CD4-positive, alpha-beta memory T cell (primary cell): ENCODE measurements at regions of chr3 and their contacts with region 1.

Region 1: GRCh38 chr3:134378384-134378783 is 4.1 kb upstream of the AMOTL2 start:
- DNase-seq: peak in 4 of 5 donors; percentile 22 to 32 (median 30)
- H3K4me3 ChIP-seq: no peak overlapping the region
- H3K4me3 Mint-ChIP-seq: no peak overlapping the region
- H3K27ac ChIP-seq: no peak overlapping the region
- H3K27ac Mint-ChIP-seq: no peak overlapping the region
- H3K4me1 ChIP-seq: peaks cover 8% of the 10 kb centered on the region
- H3K4me1 Mint-ChIP-seq: peaks cover 8 to 11% (median 10%) of the 10 kb centered on the region in 4 donors
- H3K27me3 ChIP-seq: peaks cover 10% of the 10 kb centered on the region
- H3K27me3 Mint-ChIP-seq: peaks cover 19 to 25% of the 10 kb centered on the region in 2 donors

Region 2: GRCh38 chr3:134018406-134018805 is 360.0 kb before region 1 on chr3:
- CTCF ChIA-PET with region 1: no interaction called
- POLR2A ChIA-PET with region 1: no interaction called
- intact Hi-C with region 1: no loop called
- DNase-seq: no peak
- H3K4me3 ChIP-seq: no peak overlapping the region
- H3K4me3 Mint-ChIP-seq: no peak overlapping the region
- H3K27ac ChIP-seq: no peak overlapping the region
- H3K27ac Mint-ChIP-seq: no peak overlapping the region
- H3K4me1 ChIP-seq: no peaks in the 10 kb centered on the region
- H3K4me1 Mint-ChIP-seq: no peaks in the 10 kb centered on the region
- H3K27me3 ChIP-seq: no peaks in the 10 kb centered on the region
- H3K27me3 Mint-ChIP-seq: peaks cover 4 to 5% of the 10 kb centered on the region in 2 donors

Region 3: DNA sequence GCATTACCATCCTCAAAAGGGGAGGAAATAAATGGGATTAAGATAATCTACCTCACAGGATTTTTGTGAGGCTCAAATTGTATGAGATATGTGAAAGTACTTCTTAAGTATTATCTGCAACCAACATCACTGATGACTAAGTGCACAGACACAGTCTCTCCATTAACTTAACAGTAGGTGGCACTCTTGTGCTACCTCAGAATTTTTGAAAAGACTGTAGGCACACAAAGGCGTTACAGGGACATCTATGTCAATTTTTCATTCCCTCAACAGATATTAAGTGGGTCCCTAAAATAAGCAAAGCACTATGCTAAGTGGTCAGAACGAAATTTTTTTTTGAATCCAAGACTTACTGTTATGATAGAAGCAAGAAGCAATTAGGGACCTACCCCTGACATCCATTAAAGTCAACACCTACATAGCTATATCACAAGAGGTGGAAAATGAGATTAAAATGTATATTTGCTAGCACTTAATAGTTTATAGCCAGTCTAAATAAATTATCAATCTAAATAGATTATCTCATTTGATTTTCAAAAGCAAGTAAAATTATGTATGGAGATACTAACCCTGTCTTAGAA is 180.6 kb before region 1 on chr3:
- CTCF ChIA-PET with region 1: no interaction called
- POLR2A ChIA-PET with region 1: no interaction called
- intact Hi-C with region 1: loop called (anchors 5 kb)
- DNase-seq: peak in 4 of 5 donors; percentile 39 to 49 (median 44)
- H3K4me3 ChIP-seq: no peak overlapping the region
- H3K4me3 Mint-ChIP-seq: no peak overlapping the region
- H3K27ac ChIP-seq: no peak overlapping the region
- H3K27ac Mint-ChIP-seq: no peak overlapping the region
- H3K4me1 ChIP-seq: no peaks in the 10 kb centered on the region
- H3K4me1 Mint-ChIP-seq: peaks cover 0 to 6% (median 1%) of the 10 kb centered on the region in 4 donors
- H3K27me3 ChIP-seq: no peaks in the 10 kb centered on the region
- H3K27me3 Mint-ChIP-seq: no peaks in the 10 kb centered on the region

Region 4: DNA sequence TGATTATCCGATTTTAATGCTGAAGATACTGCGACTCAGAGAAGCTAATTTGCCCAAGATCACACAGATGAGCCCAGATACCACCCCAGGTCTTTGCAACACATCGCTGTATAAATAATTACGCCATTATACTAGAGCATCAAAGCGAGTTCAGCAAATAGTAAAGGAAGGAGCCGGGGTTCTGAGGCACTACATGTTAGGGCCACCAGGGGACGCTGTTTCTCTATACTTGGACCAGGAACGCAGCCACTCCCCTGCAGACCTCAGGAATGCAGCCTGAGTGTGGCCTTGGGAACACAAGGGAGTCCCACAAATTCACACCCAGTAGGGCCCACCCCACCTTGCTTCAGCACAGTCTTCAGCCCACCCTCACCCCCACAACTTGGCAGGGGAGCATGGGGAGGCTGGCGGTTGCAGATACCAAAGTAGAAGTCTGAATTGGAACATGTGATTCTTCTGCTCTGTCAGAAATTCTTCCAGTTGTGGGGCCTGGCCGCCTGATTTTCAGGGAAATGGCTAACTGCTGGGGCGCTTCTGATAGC is 70.0 kb before region 1 on chr3:
- CTCF ChIA-PET with region 1: interaction called, 24 read pairs
- POLR2A ChIA-PET with region 1: no interaction called
- intact Hi-C with region 1: loop called (anchors 1 kb)
- DNase-seq: peak; percentile 68 to 74 (median 71)
- H3K4me3 ChIP-seq: no peak overlapping the region
- H3K4me3 Mint-ChIP-seq: peak overlapping the region in 4 of 8 donors; percentile 3 to 70 (median 67)
- H3K27ac ChIP-seq: no peak overlapping the region
- H3K27ac Mint-ChIP-seq: no peak overlapping the region
- H3K4me1 ChIP-seq: peaks cover under 1% of the 10 kb centered on the region
- H3K4me1 Mint-ChIP-seq: peaks cover 2 to 7% (median 3%) of the 10 kb centered on the region in 4 donors
- H3K27me3 ChIP-seq: peaks cover 5% of the 10 kb centered on the region
- H3K27me3 Mint-ChIP-seq: peaks cover 21% of the 10 kb centered on the region in 2 donors

Region 5: DNA sequence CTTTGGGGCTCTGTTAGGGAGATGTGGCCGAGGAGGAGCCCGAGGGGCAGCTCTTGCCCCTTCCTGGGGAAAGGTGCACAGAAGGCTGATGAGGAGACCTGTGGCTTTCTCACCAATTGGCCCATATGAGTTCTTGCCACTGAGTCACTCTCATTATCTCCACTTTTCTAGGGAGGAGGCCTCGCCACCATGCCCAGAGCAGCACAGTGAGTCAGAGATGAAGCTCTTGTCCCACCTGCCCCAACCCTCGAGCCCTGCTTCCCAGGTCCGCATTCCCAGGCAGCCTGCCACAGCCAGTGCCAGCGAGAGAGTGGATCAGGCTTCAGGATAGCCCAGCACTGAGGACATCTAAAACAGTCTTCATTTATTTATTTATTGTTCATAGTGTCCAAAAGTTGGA is 57.6 kb before region 1 on chr3:
- CTCF ChIA-PET with region 1: no interaction called
- POLR2A ChIA-PET with region 1: no interaction called
- intact Hi-C with region 1: no loop called
- DNase-seq: no peak
- H3K4me3 ChIP-seq: no peak overlapping the region
- H3K4me3 Mint-ChIP-seq: no peak overlapping the region
- H3K27ac ChIP-seq: no peak overlapping the region
- H3K27ac Mint-ChIP-seq: no peak overlapping the region
- H3K4me1 ChIP-seq: no peaks in the 10 kb centered on the region
- H3K4me1 Mint-ChIP-seq: no peaks in the 10 kb centered on the region
- H3K27me3 ChIP-seq: no peaks in the 10 kb centered on the region
- H3K27me3 Mint-ChIP-seq: peaks cover 13 to 15% of the 10 kb centered on the region in 2 donors

Region 6: DNA sequence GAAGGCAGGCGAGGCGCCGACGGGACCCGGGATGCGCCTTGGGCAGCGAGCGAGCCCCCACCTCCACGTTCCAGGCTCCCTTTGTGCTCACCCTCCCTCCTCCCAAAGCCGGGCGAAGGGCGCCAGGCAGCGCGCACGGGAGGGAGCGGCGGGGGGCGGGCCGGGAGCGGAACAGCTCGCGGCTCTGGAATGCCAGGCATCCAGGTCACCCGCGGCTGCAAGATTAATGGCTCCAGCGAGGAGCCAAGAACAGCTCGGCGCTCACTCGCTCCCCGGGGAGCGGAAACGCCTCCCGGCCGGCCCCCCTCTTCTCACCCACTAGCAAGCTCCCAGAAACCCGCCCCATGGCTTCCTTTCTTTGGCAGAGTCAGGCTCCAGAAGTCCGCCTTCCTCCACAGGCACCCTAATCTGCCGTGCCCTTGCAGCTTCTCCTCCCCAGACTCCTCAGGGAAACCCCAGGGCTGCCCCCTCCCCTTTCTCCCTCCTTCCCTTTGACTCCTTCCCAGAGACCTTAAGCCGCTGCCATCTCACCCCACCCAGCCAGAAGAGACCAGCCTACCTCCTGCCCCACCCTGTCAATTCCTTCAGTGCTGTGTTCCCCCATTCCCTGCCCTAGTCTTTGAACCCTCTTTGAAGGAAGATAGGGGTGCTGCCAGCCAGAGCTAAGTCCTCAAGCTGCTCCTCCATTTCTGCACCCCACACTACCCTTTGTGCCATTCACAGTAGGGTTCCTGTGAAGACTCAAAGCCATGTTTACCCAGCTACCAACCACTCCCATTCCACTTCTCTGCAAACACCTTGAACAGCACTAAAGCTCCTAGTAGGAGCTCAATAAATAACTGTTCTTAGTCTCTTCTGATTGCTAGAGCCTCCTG is 14.1 kb before region 1 on chr3:
- CTCF ChIA-PET with region 1: interaction called, 12 read pairs
- POLR2A ChIA-PET with region 1: interaction called, 3 read pairs
- intact Hi-C with region 1: no loop called
- DNase-seq: peak in 1 of 5 donors; percentile 8
- H3K4me3 ChIP-seq: peak overlapping the region; percentile 29 to 43
- H3K4me3 Mint-ChIP-seq: peak overlapping the region; percentile 73 to 90 (median 81)
- H3K27ac ChIP-seq: no peak overlapping the region
- H3K27ac Mint-ChIP-seq: peak overlapping the region in 6 of 7 donors; percentile 41 to 85 (median 61)
- H3K4me1 ChIP-seq: peaks cover 27% of the 10 kb centered on the region
- H3K4me1 Mint-ChIP-seq: peaks cover 18 to 30% (median 24%) of the 10 kb centered on the region in 4 donors
- H3K27me3 ChIP-seq: no peaks in the 10 kb centered on the region
- H3K27me3 Mint-ChIP-seq: no peaks in the 10 kb centered on the region

Region 7: DNA sequence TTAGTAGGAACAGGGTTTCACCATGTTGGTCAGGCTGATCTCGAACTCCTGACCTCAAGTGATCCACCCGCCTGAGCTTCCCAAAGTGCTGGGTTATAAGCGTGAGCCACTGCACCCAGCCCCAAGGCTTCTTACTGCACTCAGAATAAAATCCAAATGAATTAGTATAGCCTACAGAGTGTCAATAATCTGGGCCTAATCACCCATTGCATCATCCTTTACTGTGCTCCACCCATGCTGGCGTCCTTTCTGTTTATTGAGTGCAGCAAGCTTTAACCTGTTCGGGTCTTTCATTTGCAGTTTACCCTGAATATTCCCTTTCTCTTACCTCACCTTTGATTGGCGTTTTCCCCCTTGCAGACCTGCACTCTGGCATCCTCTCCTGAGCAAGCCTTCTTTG is 185.2 kb after region 1 on chr3:
- CTCF ChIA-PET with region 1: no interaction called
- POLR2A ChIA-PET with region 1: no interaction called
- intact Hi-C with region 1: no loop called
- DNase-seq: no peak
- H3K4me3 ChIP-seq: no peak overlapping the region
- H3K4me3 Mint-ChIP-seq: no peak overlapping the region
- H3K27ac ChIP-seq: no peak overlapping the region
- H3K27ac Mint-ChIP-seq: no peak overlapping the region
- H3K4me1 ChIP-seq: no peaks in the 10 kb centered on the region
- H3K4me1 Mint-ChIP-seq: no peaks in the 10 kb centered on the region
- H3K27me3 ChIP-seq: no peaks in the 10 kb centered on the region
- H3K27me3 Mint-ChIP-seq: no peaks in the 10 kb centered on the region

Region 8: GRCh38 chr3:134965865-134966481 is 587.6 kb after region 1 on chr3:
- CTCF ChIA-PET with region 1: no interaction called
- POLR2A ChIA-PET with region 1: no interaction called
- intact Hi-C with region 1: no loop called
- DNase-seq: no peak
- H3K4me3 ChIP-seq: no peak overlapping the region
- H3K4me3 Mint-ChIP-seq: no peak overlapping the region
- H3K27ac ChIP-seq: no peak overlapping the region
- H3K27ac Mint-ChIP-seq: no peak overlapping the region
- H3K4me1 ChIP-seq: no peaks in the 10 kb centered on the region
- H3K4me1 Mint-ChIP-seq: no peaks in the 10 kb centered on the region
- H3K27me3 ChIP-seq: no peaks in the 10 kb centered on the region
- H3K27me3 Mint-ChIP-seq: peaks cover 1 to 4% of the 10 kb centered on the region in 2 donors